Breast epithelium (tissue), 4 donors: ENCODE measurements at regions of chr14 and their contacts with region 1.

Region 1: DNA sequence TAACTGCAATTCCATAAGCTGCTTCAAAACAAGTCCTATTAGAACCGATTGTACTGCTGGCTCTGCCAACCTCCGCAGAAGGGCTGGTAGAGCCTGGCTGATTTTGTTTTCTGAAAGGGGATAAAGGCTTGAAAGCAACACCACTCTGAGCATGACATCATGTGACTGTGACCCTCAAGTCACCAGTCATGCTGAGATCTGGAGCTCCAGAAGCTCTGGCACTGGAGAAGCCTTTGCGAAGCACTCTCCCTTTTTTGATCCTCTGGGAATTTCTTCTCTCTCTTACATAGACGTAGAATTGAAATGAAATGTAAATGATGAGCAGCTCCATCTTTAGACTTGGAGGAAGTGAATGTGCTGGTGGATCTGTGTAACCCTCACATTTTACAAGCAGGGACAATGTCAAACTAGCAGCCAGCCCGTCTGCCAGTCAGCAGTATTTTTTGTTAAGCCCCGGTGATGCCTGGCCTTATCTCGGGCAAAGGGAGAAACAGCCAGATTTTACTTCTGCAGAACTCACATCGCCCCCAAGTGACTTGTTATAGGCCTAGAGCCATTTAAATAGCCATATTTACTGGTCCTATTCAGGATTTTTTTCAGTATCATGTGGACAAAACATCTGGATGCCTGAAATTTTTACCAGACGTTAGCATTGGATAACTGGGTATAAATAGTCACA is 112.1 kb upstream of the NPAS3 start:
- DNase-seq: no peak
- H3K4me3 ChIP-seq: no peak overlapping the region
- H3K27ac ChIP-seq: no peak overlapping the region
- H3K4me1 ChIP-seq: no peaks in the 10 kb centered on the region
- H3K27me3 ChIP-seq: no peaks in the 10 kb centered on the region
- CTCF ChIP-seq: no peak
- POLR2A ChIP-seq: no peak

Region 2: DNA sequence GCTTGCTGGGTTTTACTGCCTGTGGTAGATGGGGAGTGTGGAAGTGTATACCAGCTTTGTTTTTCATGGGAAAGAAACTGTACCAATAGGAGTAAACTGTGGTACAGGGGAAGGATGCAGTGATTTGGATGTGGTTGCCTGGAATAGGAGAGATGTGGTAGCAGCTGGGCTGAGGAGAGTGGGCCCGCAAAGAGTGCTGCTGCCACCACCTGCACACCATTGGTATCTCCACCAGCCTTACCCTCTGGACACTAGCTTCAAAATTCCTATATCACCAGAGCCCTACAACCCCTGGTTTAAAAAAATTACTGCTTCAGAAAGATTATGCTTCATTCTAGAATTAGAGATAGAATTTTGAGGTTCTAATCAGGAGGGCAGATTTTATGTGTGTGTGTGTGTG is 443.8 kb before region 1 on chr14:
- intact Hi-C with region 1: loop called (anchors 5 kb)
- DNase-seq: no peak
- H3K4me3 ChIP-seq: no peak overlapping the region
- H3K27ac ChIP-seq: no peak overlapping the region
- H3K4me1 ChIP-seq: no peaks in the 10 kb centered on the region
- H3K27me3 ChIP-seq: no peaks in the 10 kb centered on the region
- CTCF ChIP-seq: no peak
- POLR2A ChIP-seq: no peak